Adrenal gland (tissue), 19 donors: ENCODE measurements at regions of chr11 and their contacts with region 1.

Region 1: GRCh38 chr11:128172046-128172878 is 415.1 kb downstream of the ETS1 start:
- DNase-seq: peak; percentile 69 to 94 (median 83)
- H3K4me3 ChIP-seq: no peak overlapping the region
- H3K27ac ChIP-seq: no peak overlapping the region
- H3K4me1 ChIP-seq: no peaks in the 10 kb centered on the region
- H3K27me3 ChIP-seq: no peaks in the 10 kb centered on the region
- CTCF ChIP-seq: peak; percentile 61 to 89 (median 81)
- POLR2A ChIP-seq: no peak

Region 2: DNA sequence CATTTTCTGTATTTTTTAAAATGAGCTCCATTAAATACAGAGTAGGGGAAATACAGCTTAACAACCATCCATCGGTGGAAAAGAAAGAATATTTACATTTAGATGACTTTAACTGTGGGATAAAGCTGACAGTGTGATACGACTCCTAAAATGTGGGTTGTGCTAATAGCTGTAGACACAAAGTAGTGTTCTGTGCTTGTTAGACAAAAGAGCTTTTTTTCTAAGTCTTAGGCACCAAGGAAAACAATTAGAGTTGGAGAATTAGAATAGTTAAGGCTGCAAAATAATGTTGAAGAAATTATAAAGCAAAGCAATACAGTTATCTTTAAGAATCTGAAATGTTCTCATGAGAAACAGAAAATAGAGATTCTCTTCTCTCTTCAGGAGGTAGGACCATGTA is 864.0 kb before region 1 on chr11:
- intact Hi-C with region 1: no loop called
- DNase-seq: no peak
- H3K4me3 ChIP-seq: no peak overlapping the region
- H3K27ac ChIP-seq: no peak overlapping the region
- H3K4me1 ChIP-seq: no peaks in the 10 kb centered on the region
- H3K27me3 ChIP-seq: no peaks in the 10 kb centered on the region
- CTCF ChIP-seq: no peak
- POLR2A ChIP-seq: no peak

Region 3: GRCh38 chr11:128290106-128290840 is 118.0 kb after region 1 on chr11:
- intact Hi-C with region 1: loop called (anchors 5 to 10 kb)
- DNase-seq: peak; percentile 50 to 78 (median 57)
- H3K4me3 ChIP-seq: no peak overlapping the region
- H3K27ac ChIP-seq: peak overlapping the region in 2 of 5 donors; percentile 2 to 29
- H3K4me1 ChIP-seq: no peaks in the 10 kb centered on the region
- H3K27me3 ChIP-seq: peaks cover 3% of the 10 kb centered on the region
- CTCF ChIP-seq: peak; percentile 81 to 92 (median 86)
- POLR2A ChIP-seq: no peak

Region 4: GRCh38 chr11:128624269-128625175 is 452.3 kb after region 1 on chr11:
- intact Hi-C with region 1: loop called in 1 of 2 experiments (anchors 10 kb)
- DNase-seq: no peak
- H3K4me3 ChIP-seq: no peak overlapping the region
- H3K27ac ChIP-seq: no peak overlapping the region
- H3K4me1 ChIP-seq: no peaks in the 10 kb centered on the region
- H3K27me3 ChIP-seq: no peaks in the 10 kb centered on the region
- CTCF ChIP-seq: no peak
- POLR2A ChIP-seq: no peak

Region 5: DNA sequence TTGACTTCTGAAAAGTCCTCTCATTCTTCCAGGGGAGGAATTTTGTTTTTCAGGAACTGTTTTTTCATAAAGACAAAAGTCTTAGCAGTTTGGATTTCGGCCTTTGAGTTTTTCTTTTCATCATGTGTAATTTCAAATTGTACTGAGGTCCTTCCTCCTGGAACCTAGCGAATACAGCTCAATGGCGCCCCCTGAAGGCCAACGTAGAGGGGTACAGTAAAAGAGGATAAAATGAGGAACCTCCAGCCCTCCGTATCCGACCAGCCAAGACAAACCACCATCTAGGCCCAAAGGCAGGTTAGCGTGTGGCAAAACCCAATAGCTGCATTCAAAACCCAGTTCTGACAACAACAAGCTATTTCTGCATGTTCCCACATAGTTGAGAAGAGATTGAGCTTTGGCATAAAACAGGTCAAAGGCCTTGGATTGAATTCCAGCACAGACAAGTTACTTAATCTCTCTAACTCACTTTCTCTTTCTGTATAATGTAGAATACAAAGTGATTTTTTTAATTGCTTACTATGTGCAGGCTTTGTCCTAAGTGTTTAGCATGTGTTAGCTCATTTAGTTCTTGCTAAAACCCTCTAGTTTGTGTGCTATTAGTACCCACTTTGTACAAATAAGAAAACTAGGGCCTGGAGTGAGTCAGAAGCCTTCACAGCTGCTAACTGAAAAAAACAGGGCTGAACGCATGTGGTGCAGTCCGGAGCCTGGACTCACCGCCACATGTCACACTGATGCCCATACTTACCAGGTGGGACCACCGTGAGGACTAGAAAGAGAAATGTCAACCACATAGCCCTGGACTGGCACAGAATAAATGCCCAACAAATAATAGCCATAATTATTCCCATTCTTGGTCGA is 458.3 kb after region 1 on chr11:
- intact Hi-C with region 1: loop called (anchors 5 to 10 kb)
- DNase-seq: peak; percentile 80 to 93 (median 85)
- H3K4me3 ChIP-seq: no peak overlapping the region
- H3K27ac ChIP-seq: no peak overlapping the region
- H3K4me1 ChIP-seq: peaks cover 0 to 3% of the 10 kb centered on the region in 2 donors
- H3K27me3 ChIP-seq: no peaks in the 10 kb centered on the region
- CTCF ChIP-seq: peak; percentile 83 to 93 (median 88)
- POLR2A ChIP-seq: no peak

Region 6: GRCh38 chr11:128831174-128832120 is 659.2 kb after region 1 on chr11:
- intact Hi-C with region 1: loop called (anchors 2 to 10 kb)
- DNase-seq: peak; percentile 64 to 92 (median 80)
- H3K4me3 ChIP-seq: peak overlapping the region in 1 of 4 donors; percentile 28
- H3K27ac ChIP-seq: no peak overlapping the region
- H3K4me1 ChIP-seq: peaks cover 3 to 18% of the 10 kb centered on the region in 2 donors
- H3K27me3 ChIP-seq: no peaks in the 10 kb centered on the region
- CTCF ChIP-seq: peak; percentile 68 to 95 (median 80)
- POLR2A ChIP-seq: no peak